Activated CD4-positive, alpha-beta T cell treated with anti-CD3 and anti-CD28 coated beads for 36 hours (primary cell): ENCODE measurements at regions of chr6 and their contacts with region 1.

Region 1: GRCh38 chr6:90285611-90286381 is 10.8 kb downstream of the BACH2 start:
- DNase-seq: peak; percentile 75
- ATAC-seq: peak; percentile 40
- H3K4me3 Mint-ChIP-seq: peak overlapping the region; percentile 62
- H3K27ac Mint-ChIP-seq: peak overlapping the region; percentile 95
- H3K4me1 Mint-ChIP-seq: peaks cover 93% of the 10 kb centered on the region
- H3K27me3 Mint-ChIP-seq: no peaks in the 10 kb centered on the region

Region 2: GRCh38 chr6:90025523-90026061 is 260.2 kb before region 1 on chr6:
- CTCF ChIA-PET with region 1: no interaction called
- POLR2A ChIA-PET with region 1: no interaction called
- intact Hi-C with region 1: loop called in 1 of 2 experiments (anchors 1 kb)
- DNase-seq: peak; percentile 77
- ATAC-seq: peak; percentile 93
- H3K4me3 Mint-ChIP-seq: peak overlapping the region; percentile 22
- H3K27ac Mint-ChIP-seq: peak overlapping the region; percentile 90
- H3K4me1 Mint-ChIP-seq: peaks cover 88% of the 10 kb centered on the region
- H3K27me3 Mint-ChIP-seq: no peaks in the 10 kb centered on the region

Region 3: DNA sequence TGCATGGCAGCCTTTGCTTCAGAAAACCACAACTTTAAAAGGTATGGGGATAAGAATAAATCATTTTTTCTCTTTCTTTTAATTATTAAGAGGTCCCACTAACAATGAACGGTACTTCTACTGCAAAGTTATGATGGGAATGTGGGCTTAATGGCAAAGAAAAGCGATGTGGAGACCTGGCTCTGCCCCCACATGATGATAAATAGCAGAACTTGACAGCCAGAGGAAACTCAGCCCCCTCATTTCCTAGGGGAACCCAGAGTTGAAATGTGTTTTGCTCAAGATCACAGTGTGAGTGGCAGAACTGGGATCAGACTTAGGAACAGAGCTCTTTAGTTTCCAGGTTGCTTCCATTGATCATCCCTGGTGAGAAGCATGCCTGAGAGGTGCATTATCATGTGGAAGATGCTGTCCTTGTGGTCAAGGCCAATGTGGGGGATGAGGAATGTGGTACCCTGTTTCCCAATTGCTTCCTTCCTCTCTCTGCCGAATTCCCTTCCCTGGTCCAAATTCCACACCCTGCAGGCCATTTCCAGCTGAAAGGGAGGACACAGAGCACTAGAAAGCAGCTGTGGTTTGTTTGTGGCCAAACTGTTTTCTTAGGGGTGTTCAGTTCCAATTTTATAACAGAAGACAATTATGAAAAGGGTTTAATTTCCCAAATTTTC is 55.1 kb before region 1 on chr6:
- CTCF ChIA-PET with region 1: no interaction called
- POLR2A ChIA-PET with region 1: no interaction called
- intact Hi-C with region 1: loop called in 1 of 2 experiments (anchors 1 kb)
- DNase-seq: no peak
- ATAC-seq: no peak
- H3K4me3 Mint-ChIP-seq: no peak overlapping the region
- H3K27ac Mint-ChIP-seq: peak overlapping the region; percentile 59
- H3K4me1 Mint-ChIP-seq: peaks cover 94% of the 10 kb centered on the region
- H3K27me3 Mint-ChIP-seq: no peaks in the 10 kb centered on the region

Region 4: DNA sequence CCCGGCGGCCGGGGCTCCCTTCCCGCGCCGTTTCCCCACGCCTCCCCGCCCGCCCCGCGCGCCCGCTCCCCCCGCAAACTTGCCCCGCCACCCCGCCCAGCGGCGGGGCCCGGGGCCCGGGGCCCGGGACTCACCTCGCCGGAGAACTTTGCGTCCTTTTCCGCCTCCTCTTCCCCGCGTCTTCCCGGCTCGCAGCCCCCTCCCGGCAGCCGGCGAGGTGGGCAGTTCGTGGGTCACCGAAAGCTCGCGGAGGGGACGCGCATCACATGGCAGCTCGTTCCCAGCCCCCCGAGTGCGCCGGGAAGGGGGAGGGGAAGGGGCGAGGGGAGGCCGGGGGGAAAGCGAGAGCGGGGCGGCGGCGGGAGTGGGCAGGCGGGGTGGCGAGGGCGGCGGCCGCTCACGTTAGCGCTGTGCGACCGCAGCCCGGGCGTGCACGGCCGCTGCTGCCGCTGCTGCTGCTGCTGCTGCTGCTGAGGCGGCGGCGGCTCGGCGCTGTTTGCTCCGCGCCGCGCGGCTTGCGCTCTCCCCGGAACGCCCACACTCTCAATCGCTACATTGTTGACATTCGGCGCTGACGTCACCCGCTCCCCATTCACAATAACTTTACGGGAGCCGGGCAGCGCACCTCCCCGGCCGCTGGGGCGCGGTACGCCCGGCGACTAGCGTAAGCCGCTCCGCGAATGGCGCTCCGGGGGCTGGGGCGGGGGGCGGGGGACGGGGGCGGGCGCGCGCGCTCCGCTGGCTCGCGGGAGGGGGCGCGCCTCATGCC is 10.7 kb after region 1 on chr6 and contains the start of gene BACH2:
- CTCF ChIA-PET with region 1: interaction called, 6 read pairs
- POLR2A ChIA-PET with region 1: interaction called, 15 read pairs
- intact Hi-C with region 1: loop called in 1 of 2 experiments (anchors 1 kb)
- DNase-seq: peak; percentile 99
- ATAC-seq: peak; percentile 66
- H3K4me3 Mint-ChIP-seq: peak within 1 kb of the TSS; percentile 86
- H3K27ac Mint-ChIP-seq: peak within 1 kb of the TSS; percentile 100
- H3K4me1 Mint-ChIP-seq: peaks cover 49% of the 10 kb centered on the region
- H3K27me3 Mint-ChIP-seq: peaks cover 7% of the 10 kb centered on the region
- total RNA-seq, gene BACH2: 74.7 to 87.3 TPM

Region 5: DNA sequence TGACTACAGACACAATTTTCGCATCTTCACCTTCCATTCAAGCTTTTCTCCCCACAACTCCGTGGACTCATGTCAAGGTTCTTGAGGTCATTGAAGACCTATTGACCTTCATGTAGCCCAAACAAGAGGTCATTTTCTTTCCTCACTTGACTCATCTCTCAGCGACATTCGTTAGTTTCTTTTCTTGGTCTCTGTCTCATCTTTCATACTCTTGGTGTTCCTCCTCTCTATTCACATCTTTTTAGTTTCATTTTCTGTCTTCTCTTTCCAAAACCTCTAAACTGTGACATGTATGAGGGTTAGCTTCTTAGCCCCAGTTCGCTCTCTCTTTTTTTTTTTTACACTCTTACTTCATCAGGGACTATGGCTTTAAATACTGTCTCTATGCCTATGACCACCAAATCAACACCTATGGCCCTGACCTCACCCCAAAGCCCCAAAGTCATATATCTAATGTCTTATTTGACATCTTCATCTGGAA is 139.4 kb after region 1 on chr6:
- CTCF ChIA-PET with region 1: interaction called, 5 read pairs
- POLR2A ChIA-PET with region 1: interaction called, 3 read pairs
- intact Hi-C with region 1: loop called (anchors 1 kb)
- DNase-seq: peak; percentile 34
- ATAC-seq: peak; percentile 93
- H3K4me3 Mint-ChIP-seq: peak overlapping the region; percentile 49
- H3K27ac Mint-ChIP-seq: peak overlapping the region; percentile 94
- H3K4me1 Mint-ChIP-seq: peaks cover 34% of the 10 kb centered on the region
- H3K27me3 Mint-ChIP-seq: no peaks in the 10 kb centered on the region

Region 6: DNA sequence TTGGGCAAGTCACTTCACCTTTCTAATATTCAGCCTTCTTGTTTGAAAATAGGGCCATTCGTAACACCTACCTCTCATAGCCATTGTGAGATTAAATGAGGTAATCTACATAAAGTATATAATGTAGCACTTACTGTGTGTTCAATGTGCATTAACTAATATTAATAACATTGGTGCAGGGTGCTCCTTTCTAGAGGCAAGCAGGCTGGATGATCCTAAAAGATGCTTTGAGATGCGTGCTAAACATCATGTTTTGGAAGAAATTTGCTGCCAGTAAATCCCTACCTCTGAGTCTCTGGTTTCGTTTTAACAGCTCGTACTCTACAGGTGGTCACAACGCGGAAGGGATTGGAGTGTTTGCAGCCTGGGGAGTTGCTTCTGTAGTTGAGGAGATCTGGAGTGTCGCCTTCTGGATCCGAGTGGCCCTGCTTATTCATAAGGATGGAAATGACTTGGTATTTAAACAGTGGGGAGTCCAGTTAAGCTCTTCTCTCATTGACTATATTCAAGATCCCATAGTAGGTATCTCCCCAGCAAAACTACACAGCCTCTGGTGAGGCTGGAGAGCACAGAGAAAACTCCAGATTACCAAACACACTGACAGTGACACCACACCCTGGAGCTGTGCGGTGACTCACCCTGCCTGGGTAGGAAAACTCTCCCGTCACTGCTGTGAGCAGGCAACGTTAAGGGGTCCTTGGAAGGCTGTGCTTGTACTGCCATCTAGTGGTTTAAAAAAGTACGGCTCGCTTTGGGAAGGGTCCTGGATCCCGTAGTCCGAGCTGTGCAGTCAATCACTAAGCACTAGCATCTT is 193.2 kb after region 1 on chr6:
- CTCF ChIA-PET with region 1: interaction called, 135 read pairs
- POLR2A ChIA-PET with region 1: interaction called, 4 read pairs
- intact Hi-C with region 1: loop called (anchors 1 kb)
- DNase-seq: peak; percentile 93
- ATAC-seq: peak; percentile 93
- H3K4me3 Mint-ChIP-seq: no peak overlapping the region
- H3K27ac Mint-ChIP-seq: peak overlapping the region; percentile 85
- H3K4me1 Mint-ChIP-seq: peaks cover 61% of the 10 kb centered on the region
- H3K27me3 Mint-ChIP-seq: no peaks in the 10 kb centered on the region